CD4-positive, alpha-beta T cell (primary cell): ENCODE measurements at regions of chr16 and their contacts with region 1.

Region 1: DNA sequence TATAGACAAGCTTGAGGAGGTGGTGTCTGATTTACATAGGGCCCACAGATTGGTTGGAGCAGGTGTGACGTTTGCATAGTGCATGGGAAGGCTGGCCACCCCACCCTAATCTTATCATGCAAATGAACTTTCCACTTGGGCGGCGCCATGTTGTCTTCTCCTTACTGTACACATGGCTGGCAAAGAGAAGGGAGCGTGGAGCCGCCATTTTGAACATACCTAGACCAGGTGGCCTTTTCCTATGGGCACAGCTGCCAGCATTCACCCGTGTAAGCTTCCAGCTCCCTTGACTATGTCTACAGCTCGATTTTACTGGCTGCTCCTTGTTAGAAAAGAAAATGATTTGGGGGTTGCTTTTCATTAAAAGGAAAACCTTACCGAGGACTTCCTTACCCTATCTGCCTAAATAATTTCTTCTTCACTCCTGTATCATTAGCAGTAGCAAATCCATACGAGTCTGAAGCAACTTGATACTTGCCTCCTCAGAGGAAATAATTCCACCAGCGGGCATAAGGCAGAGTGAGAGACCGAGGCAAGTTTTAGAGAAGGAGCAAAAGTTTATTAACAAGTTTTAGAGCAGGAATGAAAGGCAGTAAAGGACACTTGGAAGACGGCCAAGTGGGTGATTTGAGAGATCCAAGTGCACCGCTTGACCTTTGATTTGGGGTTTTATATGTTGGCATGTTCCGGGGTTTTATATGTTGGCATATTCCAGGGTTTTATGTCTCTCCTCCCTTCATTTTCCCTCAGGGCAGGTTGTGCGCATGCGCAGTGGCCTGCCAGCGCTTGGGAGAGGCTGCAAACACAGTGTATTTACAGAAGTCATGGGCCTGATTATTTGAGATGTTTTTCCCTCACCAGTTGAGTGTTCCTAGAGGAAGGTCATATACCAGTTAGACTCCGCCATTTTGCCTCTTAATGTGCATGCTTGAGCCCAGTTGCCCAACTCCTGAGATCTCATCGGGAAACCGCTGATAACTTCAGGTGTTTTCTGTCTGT is 65.7 kb downstream of the MARF1 start:
- DNase-seq: no peak
- ATAC-seq: no peak
- H3K4me3 ChIP-seq: no peak overlapping the region
- H3K4me3 Mint-ChIP-seq: no peak overlapping the region
- H3K27ac ChIP-seq: no peak overlapping the region
- H3K27ac Mint-ChIP-seq: no peak overlapping the region
- H3K4me1 ChIP-seq: peaks cover 4% of the 10 kb centered on the region
- H3K4me1 Mint-ChIP-seq: no peaks in the 10 kb centered on the region
- H3K27me3 ChIP-seq: no peaks in the 10 kb centered on the region
- H3K27me3 Mint-ChIP-seq: no peaks in the 10 kb centered on the region
- CTCF ChIP-seq: no peak

Region 2: DNA sequence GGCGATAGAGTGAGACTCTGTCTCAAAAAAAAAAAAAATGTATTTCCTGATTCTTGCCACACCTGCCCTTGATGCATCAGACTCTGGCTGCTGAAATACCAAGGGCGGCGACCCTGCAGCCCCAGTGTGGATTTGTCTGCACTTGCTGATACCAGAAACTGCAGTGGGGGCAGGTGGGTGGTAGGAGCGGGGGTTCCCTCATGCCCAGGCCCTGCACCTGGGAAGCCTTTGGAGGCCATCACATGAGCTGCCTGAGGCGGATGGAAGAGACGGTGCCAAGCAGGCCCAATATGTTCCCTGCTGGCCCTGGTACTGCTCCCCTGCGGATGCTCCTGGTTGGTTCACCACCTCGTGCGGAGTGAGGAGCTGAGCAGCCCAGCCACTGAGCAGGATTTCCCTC is 15.1 kb after region 1 on chr16:
- CTCF ChIA-PET with region 1: no interaction called
- POLR2A ChIA-PET with region 1: no interaction called
- intact Hi-C with region 1: loop called in 1 of 2 experiments (anchors 1 kb)
- DNase-seq: peak in 13 of 14 experiments; percentile 8 to 72 (median 38)
- ATAC-seq: no peak
- H3K4me3 ChIP-seq: no peak overlapping the region
- H3K4me3 Mint-ChIP-seq: no peak overlapping the region
- H3K27ac ChIP-seq: peak overlapping the region; percentile 21 to 34
- H3K27ac Mint-ChIP-seq: peak overlapping the region; percentile 61
- H3K4me1 ChIP-seq: peaks cover 36% of the 10 kb centered on the region
- H3K4me1 Mint-ChIP-seq: peaks cover 20% of the 10 kb centered on the region
- H3K27me3 ChIP-seq: no peaks in the 10 kb centered on the region
- H3K27me3 Mint-ChIP-seq: no peaks in the 10 kb centered on the region
- CTCF ChIP-seq: no peak